Activated CD4-positive, alpha-beta memory T cell treated with anti-CD3 and anti-CD28 coated beads, Interleukin-2, amount 10 ng/mL, durations not matched to agents 7 days and 5 days (primary cell): ENCODE measurements at regions of chr5 and their contacts with region 1.

Region 1: DNA sequence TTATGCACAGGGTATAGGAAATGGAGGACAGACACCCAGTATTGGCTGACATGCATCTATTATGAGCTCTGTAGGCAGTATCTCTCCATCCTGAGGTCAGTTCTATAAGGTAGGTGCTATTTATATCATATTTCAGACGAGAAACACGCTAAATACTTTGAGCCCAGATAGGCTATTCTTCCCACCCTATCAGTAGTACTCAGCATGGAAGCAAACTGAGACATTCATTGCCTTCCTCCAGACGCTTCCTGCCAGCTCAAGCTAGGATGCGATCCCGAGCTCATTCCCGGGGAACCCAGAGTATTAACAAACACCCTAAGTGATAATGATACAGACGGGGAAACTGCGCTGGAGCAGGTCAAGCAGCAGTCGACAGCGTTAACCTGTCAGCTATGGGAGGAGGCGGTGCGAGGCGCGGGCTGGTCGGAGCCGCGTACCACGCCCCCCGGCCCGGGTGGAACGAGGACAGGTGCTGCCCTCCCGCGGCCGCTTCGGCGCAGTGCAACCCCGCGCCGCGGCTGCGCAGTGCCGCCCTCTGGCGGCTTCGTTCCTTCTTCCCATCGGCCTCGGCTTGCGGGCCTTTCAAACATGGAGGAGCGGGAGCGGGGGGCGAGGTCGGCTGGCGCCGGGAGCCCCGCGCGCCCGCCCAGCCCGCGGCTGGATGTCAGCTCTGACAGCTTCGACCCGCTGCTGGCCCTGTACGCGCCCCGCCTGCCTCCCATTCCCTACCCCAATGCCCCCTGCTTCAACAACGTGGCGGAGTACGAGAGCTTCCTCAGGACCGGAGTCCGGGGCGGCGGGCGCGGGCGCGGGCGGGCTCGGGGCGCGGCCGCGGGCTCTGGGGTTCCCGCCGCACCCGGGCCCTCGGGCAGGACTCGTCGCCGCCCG is at the start of gene LSM11:
- DNase-seq: peak; percentile 93
- H3K4me3 Mint-ChIP-seq: peak within 1 kb of the TSS; percentile 82
- H3K27ac Mint-ChIP-seq: peak within 1 kb of the TSS; percentile 76
- H3K4me1 Mint-ChIP-seq: peaks cover 41% of the 10 kb centered on the region
- H3K27me3 Mint-ChIP-seq: no peaks in the 10 kb centered on the region
- total RNA-seq, gene LSM11: 5.4 to 5.8 TPM

Region 2: GRCh38 chr5:157328277-157328912 is 415.0 kb before region 1 on chr5:
- CTCF ChIA-PET with region 1: interaction called, 24 read pairs
- POLR2A ChIA-PET with region 1: interaction called, 8 read pairs
- DNase-seq: peak; percentile 58
- H3K4me3 Mint-ChIP-seq: no peak overlapping the region
- H3K27ac Mint-ChIP-seq: peak overlapping the region; percentile 77
- H3K4me1 Mint-ChIP-seq: peaks cover 22% of the 10 kb centered on the region
- H3K27me3 Mint-ChIP-seq: no peaks in the 10 kb centered on the region

Region 3: DNA sequence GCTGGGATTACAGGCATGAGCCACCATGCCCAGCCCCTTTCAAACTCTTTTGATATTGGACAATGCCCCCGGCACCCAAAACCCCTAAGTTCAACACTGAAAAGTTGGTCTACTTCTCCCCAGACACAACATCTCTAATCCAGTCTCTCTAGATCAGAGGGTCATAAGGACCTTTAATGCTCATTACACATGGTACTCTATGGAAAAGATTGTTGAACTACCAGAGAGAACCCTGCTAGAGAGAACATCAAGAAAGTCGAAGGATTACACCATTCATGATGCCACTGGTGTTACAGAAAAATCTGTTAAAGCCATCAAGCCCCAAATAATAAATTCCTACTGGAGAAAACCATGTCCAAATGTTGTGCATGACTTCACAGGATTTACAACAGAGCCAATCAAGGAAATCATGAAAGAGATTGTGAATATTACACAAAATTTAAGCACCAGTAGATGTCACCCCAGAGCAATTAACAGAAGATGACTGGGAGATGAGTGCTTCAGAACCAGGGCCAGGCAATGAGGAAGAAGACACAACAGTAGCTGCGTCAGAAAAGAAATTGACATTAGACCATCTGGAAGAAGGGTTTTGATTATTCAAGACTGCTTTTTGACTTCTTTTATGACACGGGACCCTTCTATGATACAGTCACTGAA is 311.7 kb before region 1 on chr5:
- CTCF ChIA-PET with region 1: interaction called, 84 read pairs
- POLR2A ChIA-PET with region 1: interaction called, 10 read pairs
- DNase-seq: peak; percentile 26
- H3K4me3 Mint-ChIP-seq: no peak overlapping the region
- H3K27ac Mint-ChIP-seq: no peak overlapping the region
- H3K4me1 Mint-ChIP-seq: peaks cover 7% of the 10 kb centered on the region
- H3K27me3 Mint-ChIP-seq: peaks cover 13% of the 10 kb centered on the region

Region 4: GRCh38 chr5:157567032-157567431 is 176.4 kb before region 1 on chr5:
- CTCF ChIA-PET with region 1: interaction called, 13 read pairs
- POLR2A ChIA-PET with region 1: no interaction called
- DNase-seq: no peak
- H3K4me3 Mint-ChIP-seq: peak overlapping the region; percentile 44
- H3K27ac Mint-ChIP-seq: peak overlapping the region; percentile 74
- H3K4me1 Mint-ChIP-seq: peaks cover 92% of the 10 kb centered on the region
- H3K27me3 Mint-ChIP-seq: no peaks in the 10 kb centered on the region

Region 5: GRCh38 chr5:157670662-157671591 is 72.5 kb before region 1 on chr5 and contains the start of gene C5orf52:
- CTCF ChIA-PET with region 1: interaction called, 48 read pairs
- POLR2A ChIA-PET with region 1: interaction called, 5 read pairs
- DNase-seq: peak; percentile 27
- H3K4me3 Mint-ChIP-seq: peak within 1 kb of the TSS; percentile 88
- H3K27ac Mint-ChIP-seq: peak within 1 kb of the TSS; percentile 27
- H3K4me1 Mint-ChIP-seq: peaks cover 25% of the 10 kb centered on the region
- H3K27me3 Mint-ChIP-seq: peaks cover 29% of the 10 kb centered on the region
- total RNA-seq, gene C5orf52: not detected

Region 6: DNA sequence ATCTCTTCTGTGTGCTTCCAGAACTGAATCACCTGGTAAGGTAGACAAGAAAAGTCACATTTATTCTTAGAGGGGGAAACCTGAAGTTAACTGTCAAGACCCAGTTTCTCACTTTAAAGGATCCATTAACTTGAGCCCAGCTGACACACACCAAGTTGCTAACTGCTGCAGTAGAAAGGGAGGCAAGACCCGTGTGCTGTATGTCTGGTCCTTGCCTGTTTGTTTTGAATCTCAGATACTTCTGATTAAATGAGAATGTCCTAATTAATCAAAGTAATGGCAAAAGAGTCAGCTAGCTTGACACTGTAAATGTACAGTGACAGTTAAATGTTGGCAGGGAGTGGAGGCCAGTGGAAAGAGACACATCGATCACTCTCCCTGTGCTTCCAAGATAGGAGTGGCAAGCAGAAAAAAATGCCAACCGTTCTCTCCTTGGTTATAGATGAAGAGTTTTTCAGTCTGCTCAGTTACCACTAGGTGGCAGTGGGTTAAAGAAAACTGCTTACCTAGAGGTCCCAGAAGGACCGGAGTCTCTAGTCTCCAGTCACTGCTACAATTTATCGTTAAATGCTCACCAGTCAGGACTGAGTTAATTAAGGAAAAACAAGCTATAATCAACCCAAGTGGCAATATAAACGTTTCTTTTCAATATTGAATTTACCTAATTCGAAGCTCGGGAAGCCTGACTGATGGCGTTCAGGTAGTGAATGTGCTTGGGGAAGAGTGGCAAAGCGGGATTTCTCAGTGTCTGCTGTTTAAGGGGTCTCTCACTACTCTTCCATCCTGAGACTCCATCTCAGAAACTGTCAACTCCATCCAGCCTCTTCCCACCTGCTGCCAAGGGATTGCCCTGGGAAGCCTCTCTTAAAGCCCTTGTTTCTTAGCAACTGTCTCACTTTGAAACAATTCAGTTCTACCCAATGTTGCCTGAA is 18.5 kb after region 1 on chr5:
- CTCF ChIA-PET with region 1: interaction called, 16 read pairs
- POLR2A ChIA-PET with region 1: interaction called, 4 read pairs
- DNase-seq: no peak
- H3K4me3 Mint-ChIP-seq: no peak overlapping the region
- H3K27ac Mint-ChIP-seq: no peak overlapping the region
- H3K4me1 Mint-ChIP-seq: peaks cover 14% of the 10 kb centered on the region
- H3K27me3 Mint-ChIP-seq: no peaks in the 10 kb centered on the region

Region 7: GRCh38 chr5:158320178-158320674 is 576.8 kb after region 1 on chr5:
- CTCF ChIA-PET with region 1: no interaction called
- POLR2A ChIA-PET with region 1: no interaction called
- DNase-seq: no peak
- H3K4me3 Mint-ChIP-seq: no peak overlapping the region
- H3K27ac Mint-ChIP-seq: no peak overlapping the region
- H3K4me1 Mint-ChIP-seq: no peaks in the 10 kb centered on the region
- H3K27me3 Mint-ChIP-seq: no peaks in the 10 kb centered on the region